ENCODE measurements at regions of chr10 and their contacts with region 1.

Region 1: DNA sequence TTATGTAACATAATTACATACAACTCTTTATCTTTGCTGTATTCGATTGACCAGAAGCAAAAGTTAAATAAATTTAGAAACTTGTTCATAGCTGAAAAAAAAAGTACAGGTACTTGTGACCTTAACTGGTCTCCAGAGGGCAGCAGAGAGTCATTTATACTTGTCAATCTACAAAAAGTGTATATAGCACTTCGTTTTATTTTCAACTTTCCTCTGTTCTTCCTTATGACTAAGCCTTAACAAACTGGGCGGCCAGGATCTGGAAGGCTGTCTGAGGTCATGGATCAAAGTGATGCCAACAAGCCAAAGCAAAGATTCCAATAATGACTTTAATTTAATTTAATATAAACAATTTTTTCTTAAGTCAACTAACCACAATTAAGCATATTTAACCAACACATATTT is 29.8 kb downstream of the C10orf67 start:
- DNase-seq: no peak
- H3K4me3 ChIP-seq: no peak overlapping the region
- H3K27ac ChIP-seq: no peak overlapping the region
- H3K4me1 ChIP-seq: peaks cover 0 to 6% (median 0%) of the 10 kb centered on the region in 6 donors
- H3K27me3 ChIP-seq: no peaks in the 10 kb centered on the region
- CTCF ChIP-seq: peak; percentile 12 to 80 (median 67)
- POLR2A ChIP-seq: no peak

Region 2: DNA sequence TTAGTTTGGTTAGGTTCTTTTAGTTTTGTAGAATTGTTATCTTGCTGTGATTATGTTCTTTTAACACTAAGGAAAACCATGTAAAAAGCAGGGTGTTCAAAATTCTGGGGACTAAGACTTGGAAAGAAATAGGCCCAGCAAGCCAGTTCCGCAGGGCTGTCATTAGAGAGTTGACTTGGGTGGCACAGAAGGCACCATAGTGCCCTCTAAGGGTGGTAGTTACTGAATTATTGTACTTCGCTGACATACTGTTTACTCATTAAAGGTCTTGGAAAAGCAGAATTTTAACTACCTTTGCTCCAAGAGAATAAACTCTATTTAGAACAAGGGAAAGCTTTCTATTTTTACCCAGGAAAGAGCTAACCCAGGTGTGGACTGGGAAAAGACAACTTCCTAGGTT is 210.6 kb after region 1 on chr10:
- intact Hi-C with region 1: loop called (anchors 5 kb)
- DNase-seq: no peak
- H3K4me3 ChIP-seq: no peak overlapping the region
- H3K27ac ChIP-seq: no peak overlapping the region
- H3K4me1 ChIP-seq: peaks cover 0 to 25% (median 4%) of the 10 kb centered on the region in 6 donors
- H3K27me3 ChIP-seq: peaks cover 0 to under 1% (median 0%) of the 10 kb centered on the region in 7 donors
- CTCF ChIP-seq: peak in 9 of 11 experiments; percentile 11 to 50 (median 40)
- POLR2A ChIP-seq: no peak

Region 3: GRCh38 chr10:23702977-23703414 is 388.2 kb after region 1 on chr10:
- intact Hi-C with region 1: loop called (anchors 5 kb)
- DNase-seq: no peak
- H3K4me3 ChIP-seq: peak overlapping the region in 1 of 8 donors; percentile 49
- H3K27ac ChIP-seq: no peak overlapping the region
- H3K4me1 ChIP-seq: no peaks in the 10 kb centered on the region
- H3K27me3 ChIP-seq: peaks cover 0 to 18% (median 0%) of the 10 kb centered on the region in 7 donors
- CTCF ChIP-seq: peak; percentile 14 to 77 (median 60)
- POLR2A ChIP-seq: no peak

Region 4: GRCh38 chr10:24197263-24197662 is 882.4 kb after region 1 on chr10:
- intact Hi-C with region 1: loop called (anchors 10 kb)
- DNase-seq: no peak
- H3K4me3 ChIP-seq: no peak overlapping the region
- H3K27ac ChIP-seq: no peak overlapping the region
- H3K4me1 ChIP-seq: peaks cover 0 to 4% (median 0%) of the 10 kb centered on the region in 6 donors
- H3K27me3 ChIP-seq: no peaks in the 10 kb centered on the region
- CTCF ChIP-seq: no peak
- POLR2A ChIP-seq: no peak

Measured in spleen (tissue), 13 donors.